ENCODE measurements at regions of chr10 and their contacts with region 1.

Region 1: GRCh38 chr10:75235375-75236177 is at the start of gene COMTD1:
- DNase-seq: peak; percentile 96
- ATAC-seq: peak; percentile 70
- H3K4me3 Mint-ChIP-seq: peak within 1 kb of the TSS; percentile 85
- H3K27ac Mint-ChIP-seq: peak within 1 kb of the TSS; percentile 83
- H3K4me1 Mint-ChIP-seq: peaks cover 19% of the 10 kb centered on the region
- H3K27me3 Mint-ChIP-seq: no peaks in the 10 kb centered on the region
- CTCF ChIP-seq: peak; percentile 99
- total RNA-seq, gene COMTD1: 13.2 and 15.4 TPM in 2 replicates

Region 2: GRCh38 chr10:73252445-73253224 is 1982.9 kb before region 1 on chr10 and contains the start of gene MRPS16:
- CTCF ChIA-PET with region 1: no interaction called
- POLR2A ChIA-PET with region 1: no interaction called
- intact Hi-C with region 1: loop called (anchors 5 kb)
- DNase-seq: peak; percentile 84
- ATAC-seq: peak; percentile 89
- H3K4me3 Mint-ChIP-seq: peak within 1 kb of the TSS; percentile 99
- H3K27ac Mint-ChIP-seq: peak within 1 kb of the TSS; percentile 95
- H3K4me1 Mint-ChIP-seq: peaks cover 44% of the 10 kb centered on the region
- H3K27me3 Mint-ChIP-seq: no peaks in the 10 kb centered on the region
- CTCF ChIP-seq: no peak
- total RNA-seq, gene MRPS16: 85.9 and 88.5 TPM in 2 replicates

Region 3: DNA sequence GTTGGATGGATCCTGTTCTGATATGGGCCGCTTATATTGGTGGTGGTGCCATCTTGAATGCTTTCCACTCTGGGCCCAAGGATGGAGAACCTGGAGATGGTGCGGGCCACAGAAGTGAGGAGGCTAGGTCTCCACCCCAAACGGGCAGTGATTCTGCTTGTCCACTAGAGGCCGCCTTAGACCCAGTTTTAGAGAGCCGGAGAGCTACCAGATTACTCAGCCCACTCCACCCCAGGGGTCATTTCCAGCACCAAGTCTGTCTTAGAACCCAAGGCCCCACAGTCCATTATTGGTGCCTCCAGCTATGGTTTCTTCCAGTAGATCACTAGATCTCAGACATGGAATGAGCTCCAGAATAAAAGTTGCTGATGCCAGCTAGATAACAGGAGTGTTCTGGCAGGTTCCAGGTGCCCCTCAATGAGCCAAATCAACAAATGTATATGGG is 1349.5 kb before region 1 on chr10:
- CTCF ChIA-PET with region 1: no interaction called
- POLR2A ChIA-PET with region 1: no interaction called
- intact Hi-C with region 1: loop called (anchors 5 kb)
- DNase-seq: peak; percentile 52
- ATAC-seq: peak; percentile 97
- H3K4me3 Mint-ChIP-seq: no peak overlapping the region
- H3K27ac Mint-ChIP-seq: no peak overlapping the region
- H3K4me1 Mint-ChIP-seq: peaks cover 11% of the 10 kb centered on the region
- H3K27me3 Mint-ChIP-seq: no peaks in the 10 kb centered on the region
- CTCF ChIP-seq: no peak

Region 4: DNA sequence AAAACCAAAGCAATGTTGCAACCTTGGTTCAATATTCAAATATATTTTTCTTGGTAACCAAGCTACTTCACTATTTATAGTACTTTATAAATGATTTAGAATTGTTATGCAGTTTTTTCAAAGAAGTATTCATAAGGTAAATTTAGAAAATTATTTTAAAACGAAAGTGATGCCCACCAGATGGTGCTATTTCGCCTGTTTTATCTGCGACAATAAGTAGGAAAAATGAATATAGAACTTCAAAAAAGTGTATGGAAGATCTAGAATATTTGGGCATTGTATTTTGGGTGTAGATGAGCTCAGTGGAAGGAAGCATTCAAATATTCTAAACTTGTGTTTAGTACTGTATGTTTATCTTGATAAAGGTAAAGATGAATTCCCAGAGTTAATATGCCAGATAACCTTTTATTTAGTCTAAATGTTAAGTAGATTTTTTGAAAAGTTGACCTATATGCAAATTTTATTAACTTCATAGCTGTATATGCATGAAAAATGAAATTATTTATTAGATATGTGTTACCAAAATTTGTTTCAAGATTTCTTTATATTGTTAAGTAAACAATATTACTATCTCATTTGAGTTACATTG is 991.4 kb before region 1 on chr10:
- CTCF ChIA-PET with region 1: interaction called, 20 read pairs
- POLR2A ChIA-PET with region 1: interaction called, 3 read pairs
- intact Hi-C with region 1: loop called (anchors 1 kb)
- DNase-seq: no peak
- ATAC-seq: no peak
- H3K4me3 Mint-ChIP-seq: no peak overlapping the region
- H3K27ac Mint-ChIP-seq: no peak overlapping the region
- H3K4me1 Mint-ChIP-seq: peaks cover 4% of the 10 kb centered on the region
- H3K27me3 Mint-ChIP-seq: no peaks in the 10 kb centered on the region
- CTCF ChIP-seq: peak; percentile 79

Region 5: DNA sequence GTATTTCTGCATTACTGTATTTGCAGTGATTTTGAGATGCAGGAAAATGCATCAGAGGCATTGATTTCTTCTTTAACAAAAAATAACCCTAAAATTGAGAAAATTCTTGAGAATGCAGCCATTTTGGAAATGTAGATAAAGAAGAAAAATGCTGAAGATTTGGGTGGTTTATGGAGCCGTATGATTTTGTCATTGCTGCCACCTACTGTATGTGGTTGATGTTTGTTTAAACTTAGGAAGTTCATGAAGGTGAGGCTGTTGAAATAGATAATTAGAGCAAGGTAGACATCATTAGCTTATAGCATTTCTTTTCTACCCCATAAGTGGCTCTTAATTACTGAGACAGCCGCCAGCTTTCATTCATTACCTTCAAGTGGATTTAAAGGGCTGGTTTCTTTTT is 216.2 kb before region 1 on chr10:
- CTCF ChIA-PET with region 1: no interaction called
- POLR2A ChIA-PET with region 1: interaction called, 8 read pairs
- intact Hi-C with region 1: loop called (anchors 5 kb)
- DNase-seq: no peak
- ATAC-seq: peak; percentile 41
- H3K4me3 Mint-ChIP-seq: no peak overlapping the region
- H3K27ac Mint-ChIP-seq: no peak overlapping the region
- H3K4me1 Mint-ChIP-seq: peaks cover 13% of the 10 kb centered on the region
- H3K27me3 Mint-ChIP-seq: no peaks in the 10 kb centered on the region
- CTCF ChIP-seq: no peak

Region 6: DNA sequence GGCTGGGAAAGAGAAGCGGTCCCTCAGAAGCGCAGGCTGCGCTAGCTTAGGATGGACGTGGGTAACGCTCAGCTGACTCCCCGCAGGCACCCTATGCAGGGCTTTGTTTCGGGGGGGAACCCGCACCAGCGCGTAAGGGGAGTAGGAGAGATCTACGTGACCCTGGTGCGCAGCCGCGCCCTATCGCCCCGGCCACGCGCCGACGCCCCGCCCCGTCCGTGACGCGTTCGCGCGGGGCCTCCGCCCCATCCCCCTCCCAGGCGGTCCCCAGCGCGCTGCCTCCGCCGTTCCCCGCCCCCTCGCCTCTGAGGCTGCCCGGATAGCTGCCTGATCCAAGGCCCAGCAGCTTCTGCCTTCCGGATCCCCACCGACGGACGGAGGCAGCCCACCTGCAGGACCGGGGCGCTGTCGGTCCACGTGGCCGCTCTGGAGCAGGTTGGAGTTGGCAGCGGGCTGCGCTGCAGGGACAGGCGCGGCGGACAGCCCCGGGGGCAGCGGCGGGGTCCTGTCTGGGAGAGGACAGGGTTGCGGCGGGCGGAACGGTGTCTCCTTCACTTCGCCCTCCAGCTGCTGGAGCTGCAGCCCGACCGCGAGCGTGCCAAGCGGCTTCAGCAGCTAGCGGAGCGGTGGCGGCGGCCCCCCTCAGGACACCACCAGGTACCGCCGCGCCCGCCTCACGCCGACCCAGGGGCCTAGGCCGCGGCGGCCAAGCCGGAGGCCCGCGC is 25.1 kb before region 1 on chr10 and contains the start of gene VDAC2:
- CTCF ChIA-PET with region 1: interaction called, 20 read pairs
- POLR2A ChIA-PET with region 1: interaction called, 60 read pairs
- intact Hi-C with region 1: loop called (anchors 1 kb)
- DNase-seq: peak; percentile 98
- ATAC-seq: peak; percentile 89
- H3K4me3 Mint-ChIP-seq: peak within 1 kb of the TSS; percentile 99
- H3K27ac Mint-ChIP-seq: peak within 1 kb of the TSS; percentile 100
- H3K4me1 Mint-ChIP-seq: peaks cover 27% of the 10 kb centered on the region
- H3K27me3 Mint-ChIP-seq: no peaks in the 10 kb centered on the region
- CTCF ChIP-seq: no peak
- total RNA-seq, gene VDAC2: 99.0 and 104 TPM in 2 replicates